ENCODE measurements at regions of chr14 and their contacts with region 1.

Region 1: DNA sequence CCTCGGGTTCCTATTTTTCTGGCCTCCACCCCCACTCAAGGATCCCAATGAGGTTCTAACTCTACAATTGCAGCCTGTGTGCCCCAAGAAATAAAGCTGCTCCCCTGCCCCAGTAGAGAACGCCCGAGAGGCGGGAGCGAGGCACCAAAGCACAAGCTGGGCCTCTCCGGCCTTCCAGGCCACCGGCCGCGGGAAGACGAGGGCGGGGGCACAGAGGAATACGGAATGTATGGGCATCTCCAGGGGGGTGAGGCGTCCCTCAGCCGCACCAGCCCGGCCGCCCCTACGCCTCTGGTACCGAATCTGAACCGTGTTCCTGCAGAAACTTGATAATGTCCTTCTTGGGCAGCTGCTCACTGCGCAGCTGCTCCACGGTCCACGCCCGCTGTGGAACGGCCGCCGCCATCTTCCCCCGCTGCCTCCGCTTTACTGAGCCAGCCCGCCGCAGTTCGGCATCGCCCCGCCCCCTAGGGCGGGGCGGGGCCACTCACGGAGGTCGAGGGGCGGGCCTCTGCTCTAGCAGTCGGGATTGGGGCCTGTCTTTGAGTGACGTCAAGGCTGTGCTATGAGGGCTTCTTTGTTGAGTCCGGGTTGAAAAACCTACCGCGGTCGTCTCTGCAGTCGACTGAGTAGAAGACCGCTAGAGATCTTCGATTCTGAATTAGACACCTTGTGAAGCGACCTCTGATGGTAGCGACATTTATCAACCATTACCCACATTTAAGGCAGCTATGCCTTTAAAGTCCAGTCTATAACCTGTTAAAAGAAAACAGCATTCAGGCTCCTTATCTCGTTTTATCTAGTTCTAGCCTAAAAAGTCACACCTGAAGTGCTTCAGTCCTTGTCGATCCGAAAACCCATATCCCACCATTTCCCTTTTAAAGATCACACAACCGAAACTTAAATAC is at the start of gene FKBP3:
- H3K4me3 Mint-ChIP-seq: peak within 1 kb of the TSS; percentile 95
- H3K27ac Mint-ChIP-seq: peak within 1 kb of the TSS; percentile 96
- H3K4me1 Mint-ChIP-seq: peaks cover 25% of the 10 kb centered on the region
- H3K27me3 Mint-ChIP-seq: no peaks in the 10 kb centered on the region

Region 2: GRCh38 chr14:44897045-44897844 is 237.1 kb before region 1 on chr14:
- intact Hi-C with region 1: loop called (anchors 1 kb)
- H3K4me3 Mint-ChIP-seq: peak overlapping the region; percentile 93
- H3K27ac Mint-ChIP-seq: peak overlapping the region; percentile 93
- H3K4me1 Mint-ChIP-seq: peaks cover 14% of the 10 kb centered on the region
- H3K27me3 Mint-ChIP-seq: no peaks in the 10 kb centered on the region

Region 3: GRCh38 chr14:44961604-44962333 is 172.5 kb before region 1 on chr14 and contains the starts of genes KLHL28 and TOGARAM1:
- intact Hi-C with region 1: loop called (anchors 1 kb)
- H3K4me3 Mint-ChIP-seq: no peak within 1 kb of the TSS
- H3K27ac Mint-ChIP-seq: no peak within 1 kb of the TSS
- H3K4me1 Mint-ChIP-seq: peaks cover 43% of the 10 kb centered on the region
- H3K27me3 Mint-ChIP-seq: no peaks in the 10 kb centered on the region

Region 4: GRCh38 chr14:45083971-45084722 is 50.2 kb before region 1 on chr14 and contains the start of gene PRPF39:
- intact Hi-C with region 1: loop called (anchors 1 kb)
- H3K4me3 Mint-ChIP-seq: peak within 1 kb of the TSS; percentile 97
- H3K27ac Mint-ChIP-seq: peak within 1 kb of the TSS; percentile 96
- H3K4me1 Mint-ChIP-seq: peaks cover 39% of the 10 kb centered on the region
- H3K27me3 Mint-ChIP-seq: peaks cover 9% of the 10 kb centered on the region

Region 5: GRCh38 chr14:45253068-45253753 is 118.9 kb after region 1 on chr14 and contains the start of gene MIS18BP1:
- intact Hi-C with region 1: loop called (anchors 1 kb)
- H3K4me3 Mint-ChIP-seq: peak within 1 kb of the TSS; percentile 89
- H3K27ac Mint-ChIP-seq: peak within 1 kb of the TSS; percentile 97
- H3K4me1 Mint-ChIP-seq: peaks cover 28% of the 10 kb centered on the region
- H3K27me3 Mint-ChIP-seq: no peaks in the 10 kb centered on the region

Region 6: GRCh38 chr14:45267071-45267470 is 132.8 kb after region 1 on chr14:
- intact Hi-C with region 1: loop called (anchors 5 kb)
- H3K4me3 Mint-ChIP-seq: no peak overlapping the region
- H3K27ac Mint-ChIP-seq: no peak overlapping the region
- H3K4me1 Mint-ChIP-seq: no peaks in the 10 kb centered on the region
- H3K27me3 Mint-ChIP-seq: no peaks in the 10 kb centered on the region

Measured in dendritic cell treated with granulocyte-macrophage colony-stimulating factor and Interleukin-4, amounts not matched to agents 40 ng/mL and 50 ng/mL, for 4 days (primary cell).